ENCODE measurements at regions of chr13 and their contacts with region 1.

Region 1: GRCh38 chr13:98842864-98843481 is 90.5 kb upstream of the SLC15A1 start:
- DNase-seq: peak; percentile 72
- H3K4me3 ChIP-seq: no peak overlapping the region; a peak in 1 of 4 replicates
- H3K27ac ChIP-seq: no peak overlapping the region
- H3K4me1 ChIP-seq: peaks cover 6 to 7% of the 10 kb centered on the region in 2 experiments; a peak in 2 of 4 replicates
- H3K27me3 ChIP-seq: no peaks in the 10 kb centered on the region
- CTCF ChIP-seq: peak; percentile 91
- EP300 ChIP-seq: no peak
- RAD21 ChIP-seq: peak; percentile 97

Region 2: DNA sequence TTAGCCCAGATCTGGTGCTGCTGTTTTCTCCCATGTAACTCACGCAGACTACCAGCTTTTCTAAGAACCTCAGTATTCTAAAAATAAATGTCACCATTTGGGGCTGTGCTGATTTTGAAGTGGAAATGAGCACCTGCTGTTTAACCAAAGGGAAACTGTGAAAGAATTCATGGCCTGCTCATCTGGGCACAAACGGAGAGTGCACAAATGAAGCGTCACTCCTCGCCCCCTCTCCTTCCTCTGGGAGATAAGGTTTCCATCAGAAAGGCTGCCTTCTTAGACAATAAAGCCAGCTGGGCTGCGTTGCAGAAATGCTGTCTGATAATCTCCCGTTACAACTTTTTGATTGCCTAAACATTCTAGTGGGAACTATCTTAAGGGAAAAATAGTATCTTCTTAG is 16.8 kb before region 1 on chr13:
- CTCF ChIA-PET with region 1: interaction called, 25 read pairs
- POLR2A ChIA-PET with region 1: no interaction called
- DNase-seq: no peak
- H3K4me3 ChIP-seq: no peak overlapping the region
- H3K27ac ChIP-seq: no peak overlapping the region
- H3K4me1 ChIP-seq: peaks cover 22 to 31% of the 10 kb centered on the region in 2 experiments
- H3K27me3 ChIP-seq: no peaks in the 10 kb centered on the region
- CTCF ChIP-seq: no peak
- EP300 ChIP-seq: no peak
- RAD21 ChIP-seq: no peak

Region 3: GRCh38 chr13:98934243-98934642 is 91.3 kb after region 1 on chr13:
- CTCF ChIA-PET with region 1: no interaction called
- POLR2A ChIA-PET with region 1: no interaction called
- DNase-seq: no peak
- H3K4me3 ChIP-seq: no peak overlapping the region
- H3K27ac ChIP-seq: no peak overlapping the region
- H3K4me1 ChIP-seq: peaks cover 0 to 10% of the 10 kb centered on the region in 2 experiments; a peak in 1 of 4 replicates
- H3K27me3 ChIP-seq: no peaks in the 10 kb centered on the region
- CTCF ChIP-seq: no peak
- EP300 ChIP-seq: no peak
- RAD21 ChIP-seq: no peak

Measured in SK-N-SH (cell line).